ENCODE measurements at regions of chr14 and their contacts with region 1.

Region 1: GRCh38 chr14:101628471-101628966 is 67.2 kb downstream of the DIO3 start:
- DNase-seq: peak; percentile 79
- H3K4me3 ChIP-seq: no peak overlapping the region
- H3K27ac ChIP-seq: no peak overlapping the region
- H3K4me1 ChIP-seq: peaks cover 10% of the 10 kb centered on the region
- CTCF ChIP-seq: peak; percentile 93

Region 2: GRCh38 chr14:100850841-100851585 is 777.5 kb before region 1 on chr14:
- CTCF ChIA-PET with region 1: no interaction called
- POLR2A ChIA-PET with region 1: no interaction called
- intact Hi-C with region 1: loop called (anchors 2 kb)
- DNase-seq: peak; percentile 67
- H3K4me3 ChIP-seq: no peak overlapping the region
- H3K27ac ChIP-seq: no peak overlapping the region
- H3K4me1 ChIP-seq: no peaks in the 10 kb centered on the region
- CTCF ChIP-seq: peak; percentile 90

Region 3: DNA sequence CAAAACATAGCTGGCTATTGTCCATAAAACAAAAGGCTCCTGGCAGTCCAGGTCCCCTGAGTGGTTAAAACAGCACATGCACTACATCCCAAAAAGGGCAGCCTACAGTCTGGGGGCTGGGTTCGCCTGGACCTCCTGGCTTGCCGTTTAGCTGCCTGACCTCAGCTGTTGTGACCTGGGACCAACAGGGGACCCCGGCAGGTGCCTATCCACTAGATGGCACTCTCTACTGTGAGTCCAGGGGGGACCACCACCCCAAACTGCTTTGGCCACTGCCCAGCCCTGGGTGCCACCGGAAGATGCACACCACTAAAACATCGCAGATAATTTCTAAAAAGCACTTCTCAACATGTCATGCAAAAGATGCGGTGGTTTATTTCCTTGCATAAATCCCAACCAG is 722.1 kb before region 1 on chr14:
- CTCF ChIA-PET with region 1: no interaction called
- POLR2A ChIA-PET with region 1: no interaction called
- intact Hi-C with region 1: loop called (anchors 2 kb)
- DNase-seq: peak; percentile 26
- H3K4me3 ChIP-seq: no peak overlapping the region
- H3K27ac ChIP-seq: no peak overlapping the region
- H3K4me1 ChIP-seq: no peaks in the 10 kb centered on the region
- CTCF ChIP-seq: peak; percentile 77

Region 4: DNA sequence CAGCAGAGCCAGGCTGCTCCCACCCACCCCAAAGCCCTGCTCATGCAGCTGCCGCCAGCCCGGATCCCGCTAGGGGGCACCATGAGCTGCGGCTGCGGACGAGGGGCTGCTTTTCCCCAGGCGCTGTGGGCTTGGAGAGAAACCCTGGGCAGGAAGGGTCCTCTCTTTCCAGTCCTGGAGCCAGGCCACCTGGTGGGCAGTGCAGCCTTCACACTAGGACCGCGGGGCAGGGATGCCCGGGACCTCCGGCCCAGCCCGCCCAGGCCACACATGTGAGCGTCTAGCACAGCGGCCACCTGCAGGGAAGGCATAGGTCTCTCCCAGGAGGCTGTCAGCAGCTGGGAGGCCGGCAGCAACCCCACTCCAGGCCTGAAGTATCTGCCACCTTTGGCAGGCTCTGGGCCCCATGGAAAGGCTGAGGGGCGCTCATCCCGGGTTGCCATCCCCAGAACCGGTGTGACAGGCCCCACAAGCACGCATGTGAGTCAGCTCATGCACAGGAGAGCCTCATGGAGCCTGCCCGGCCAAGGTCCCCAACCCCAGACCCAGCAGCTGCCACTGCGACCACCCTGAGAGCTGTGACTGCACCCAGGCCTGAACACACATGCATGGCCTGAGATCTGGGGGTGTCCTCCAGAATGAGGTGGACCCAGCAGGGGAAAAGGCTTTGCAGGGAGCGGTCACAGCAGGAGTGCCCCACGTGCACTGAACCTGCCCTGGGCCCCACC is 445.0 kb before region 1 on chr14:
- CTCF ChIA-PET with region 1: no interaction called
- POLR2A ChIA-PET with region 1: no interaction called
- intact Hi-C with region 1: loop called (anchors 1 kb)
- DNase-seq: peak; percentile 41
- H3K4me3 ChIP-seq: no peak overlapping the region
- H3K27ac ChIP-seq: no peak overlapping the region
- H3K4me1 ChIP-seq: no peaks in the 10 kb centered on the region
- CTCF ChIP-seq: peak; percentile 73

Region 5: DNA sequence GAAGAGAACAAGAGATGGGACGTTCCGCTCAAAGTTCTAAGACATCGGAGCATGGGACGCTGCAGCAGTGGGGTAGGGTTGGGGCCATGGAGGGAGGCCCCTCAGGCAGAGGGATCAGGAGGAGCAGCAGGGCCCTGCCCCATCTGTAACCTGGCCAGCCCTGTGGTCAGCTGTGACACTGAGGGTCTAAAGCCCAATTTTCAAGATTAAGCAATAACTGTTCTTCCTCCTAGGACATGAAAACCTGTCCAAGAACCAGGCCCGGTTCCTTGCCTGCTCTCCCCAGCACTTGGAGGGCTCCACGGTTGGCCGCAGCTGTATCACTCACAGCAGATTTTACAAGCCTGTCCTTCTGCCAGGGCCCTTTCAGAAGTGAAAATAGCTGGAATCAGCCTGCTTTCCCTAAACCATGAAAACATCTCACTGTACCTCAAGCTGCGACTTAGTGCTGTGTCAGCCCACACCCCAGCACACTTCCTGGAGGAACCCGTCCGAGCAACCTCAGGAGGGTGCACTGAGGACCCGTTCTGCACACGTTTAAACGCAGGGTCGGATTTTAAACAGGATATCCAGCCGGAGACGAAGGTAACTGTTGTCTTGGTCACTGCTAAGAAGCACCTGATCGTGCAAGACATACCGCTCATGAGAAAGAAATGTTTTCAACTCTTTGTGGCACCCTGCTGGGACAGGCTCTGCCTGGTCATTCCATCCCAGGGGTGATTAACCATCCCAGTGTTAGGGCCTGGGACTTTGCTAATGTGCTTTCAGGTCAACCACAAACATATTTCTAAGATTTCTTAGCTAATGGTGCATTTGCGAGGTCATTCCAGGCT is 269.1 kb before region 1 on chr14:
- CTCF ChIA-PET with region 1: no interaction called
- POLR2A ChIA-PET with region 1: no interaction called
- intact Hi-C with region 1: loop called (anchors 5 kb)
- DNase-seq: peak; percentile 75
- H3K4me3 ChIP-seq: peak overlapping the region; percentile 61
- H3K27ac ChIP-seq: peak overlapping the region; percentile 98
- H3K4me1 ChIP-seq: peaks cover 70% of the 10 kb centered on the region
- CTCF ChIP-seq: no peak

Region 6: DNA sequence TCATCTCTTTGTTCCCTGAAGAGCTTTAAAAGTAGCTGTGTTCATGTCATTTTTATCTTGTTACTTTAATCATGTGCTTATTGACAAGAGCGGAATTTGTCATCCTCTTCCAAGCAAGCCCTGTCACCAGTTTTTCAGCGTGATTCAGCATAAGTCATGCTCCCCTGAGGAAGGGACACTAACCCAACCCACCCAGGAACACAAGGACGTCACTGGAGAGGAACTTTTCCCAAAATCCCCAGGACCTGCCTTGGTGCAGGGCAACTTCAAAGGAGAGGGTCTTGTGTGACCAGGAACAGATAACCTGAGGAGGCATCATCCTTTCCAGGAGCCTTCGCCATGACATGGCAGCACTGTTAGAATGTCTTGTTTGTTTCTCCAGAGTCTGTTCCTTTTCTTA is 174.3 kb before region 1 on chr14:
- CTCF ChIA-PET with region 1: no interaction called
- POLR2A ChIA-PET with region 1: no interaction called
- intact Hi-C with region 1: loop called (anchors 5 kb)
- DNase-seq: no peak
- H3K4me3 ChIP-seq: no peak overlapping the region
- H3K27ac ChIP-seq: no peak overlapping the region
- H3K4me1 ChIP-seq: peaks cover 37% of the 10 kb centered on the region
- CTCF ChIP-seq: no peak